Esophagus muscularis mucosa (tissue), 4 donors: ENCODE measurements at regions of chr13 and their contacts with region 1.

Region 1: GRCh38 chr13:110225609-110226562 is 81.1 kb downstream of the COL4A1 start:
- DNase-seq: peak; percentile 47
- H3K4me3 ChIP-seq: no peak overlapping the region
- H3K27ac ChIP-seq: peak overlapping the region; percentile 51 to 95 (median 92)
- H3K4me1 ChIP-seq: peaks cover 41 to 98% (median 80%) of the 10 kb centered on the region in 4 donors
- H3K27me3 ChIP-seq: no peaks in the 10 kb centered on the region
- CTCF ChIP-seq: no peak
- EP300 ChIP-seq: no peak
- POLR2A ChIP-seq: no peak

Region 2: DNA sequence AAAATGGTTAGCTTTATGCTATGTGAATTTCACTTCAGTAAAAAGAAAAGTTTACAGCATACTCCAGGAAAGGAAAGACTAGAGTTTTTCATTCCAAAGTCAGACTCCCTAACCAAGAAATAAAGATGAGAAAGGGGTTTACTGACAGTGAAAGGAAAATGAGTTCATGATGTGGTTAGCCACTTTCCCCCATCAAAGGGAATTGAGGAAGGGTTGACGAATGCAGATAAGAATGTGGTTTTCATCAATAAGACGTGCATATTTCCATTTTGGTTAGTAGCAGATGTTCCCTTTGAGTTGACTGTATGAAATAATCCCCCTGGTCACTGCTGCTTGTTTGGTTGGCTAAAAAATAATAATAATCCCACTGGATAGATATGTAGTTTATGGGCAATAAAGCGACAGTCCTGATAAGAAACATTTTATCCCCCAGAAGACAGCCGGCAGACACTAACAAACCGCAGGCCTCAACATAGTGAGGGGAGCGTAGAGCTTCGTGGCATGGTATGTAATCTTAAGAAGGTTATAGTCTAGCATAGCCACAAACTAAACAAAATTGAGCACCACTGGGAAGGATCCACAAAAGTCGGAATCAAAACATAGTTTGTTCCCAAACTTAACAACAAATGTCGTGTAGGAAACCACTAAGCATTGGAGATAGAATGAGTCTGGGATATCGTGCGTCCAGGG is 196.0 kb after region 1 on chr13:
- intact Hi-C with region 1: no loop called
- DNase-seq: no peak
- H3K4me3 ChIP-seq: no peak overlapping the region
- H3K27ac ChIP-seq: peak overlapping the region; percentile 58 to 98 (median 78)
- H3K4me1 ChIP-seq: peaks cover 34 to 87% (median 76%) of the 10 kb centered on the region in 4 donors
- H3K27me3 ChIP-seq: no peaks in the 10 kb centered on the region
- CTCF ChIP-seq: no peak
- EP300 ChIP-seq: no peak
- POLR2A ChIP-seq: no peak

Region 3: GRCh38 chr13:110447058-110447511 is 221.2 kb after region 1 on chr13:
- intact Hi-C with region 1: loop called (anchors 2 kb)
- DNase-seq: no peak
- H3K4me3 ChIP-seq: no peak overlapping the region
- H3K27ac ChIP-seq: peak overlapping the region; percentile 71 to 83 (median 81)
- H3K4me1 ChIP-seq: peaks cover 5 to 52% (median 48%) of the 10 kb centered on the region in 4 donors
- H3K27me3 ChIP-seq: no peaks in the 10 kb centered on the region
- CTCF ChIP-seq: no peak
- EP300 ChIP-seq: no peak
- POLR2A ChIP-seq: no peak